H1 (cell line): ENCODE measurements at regions of chr17 and their contacts with region 1.

Region 1: GRCh38 chr17:74776044-74776977 is at the start of gene NAT9:
- DNase-seq: peak; percentile 92 to 100
- H3K4me3 ChIP-seq: peak within 1 kb of the TSS; percentile 73 to 89 (median 80)
- H3K27ac ChIP-seq: peak within 1 kb of the TSS; percentile 39; the same call in 1 of the 2 replicates
- H3K4me1 ChIP-seq: peaks cover 0 to 6% (median 3%) of the 10 kb centered on the region in 4 experiments; a peak in 3 of 7 replicates
- H3K27me3 ChIP-seq: no peaks in the 10 kb centered on the region
- CTCF ChIP-seq: no peak
- EP300 ChIP-seq: no peak
- POLR2A ChIP-seq: no peak; a peak in 1 of 3 replicates
- RAD21 ChIP-seq: no peak
- total RNA-seq, gene NAT9: 40.6 and 42.7 TPM in 2 replicates

Region 2: GRCh38 chr17:74712756-74713155 is 63.6 kb before region 1 on chr17 and contains the start of gene CD300LF:
- CTCF ChIA-PET with region 1: no interaction called
- POLR2A ChIA-PET with region 1: no interaction called
- DNase-seq: no peak
- H3K4me3 ChIP-seq: no peak within 1 kb of the TSS
- H3K27ac ChIP-seq: no peak within 1 kb of the TSS
- H3K4me1 ChIP-seq: no peaks in the 10 kb centered on the region
- H3K27me3 ChIP-seq: no peaks in the 10 kb centered on the region; a peak in 1 of 7 replicates
- CTCF ChIP-seq: no peak
- EP300 ChIP-seq: no peak
- POLR2A ChIP-seq: no peak
- RAD21 ChIP-seq: no peak
- total RNA-seq, gene CD300LF: not detected in 2 replicates

Region 3: GRCh38 chr17:74742153-74742515 is 34.2 kb before region 1 on chr17:
- CTCF ChIA-PET with region 1: interaction called, 388 read pairs
- POLR2A ChIA-PET with region 1: interaction called, 44 read pairs
- DNase-seq: no peak
- H3K4me3 ChIP-seq: no peak overlapping the region
- H3K27ac ChIP-seq: no peak overlapping the region
- H3K4me1 ChIP-seq: peaks cover 10 to 29% (median 19%) of the 10 kb centered on the region in 4 experiments
- H3K27me3 ChIP-seq: peaks cover 0 to 3% (median 0%) of the 10 kb centered on the region in 4 experiments; a peak in 2 of 7 replicates
- CTCF ChIP-seq: no peak
- EP300 ChIP-seq: no peak
- POLR2A ChIP-seq: no peak
- RAD21 ChIP-seq: no peak

Region 4: DNA sequence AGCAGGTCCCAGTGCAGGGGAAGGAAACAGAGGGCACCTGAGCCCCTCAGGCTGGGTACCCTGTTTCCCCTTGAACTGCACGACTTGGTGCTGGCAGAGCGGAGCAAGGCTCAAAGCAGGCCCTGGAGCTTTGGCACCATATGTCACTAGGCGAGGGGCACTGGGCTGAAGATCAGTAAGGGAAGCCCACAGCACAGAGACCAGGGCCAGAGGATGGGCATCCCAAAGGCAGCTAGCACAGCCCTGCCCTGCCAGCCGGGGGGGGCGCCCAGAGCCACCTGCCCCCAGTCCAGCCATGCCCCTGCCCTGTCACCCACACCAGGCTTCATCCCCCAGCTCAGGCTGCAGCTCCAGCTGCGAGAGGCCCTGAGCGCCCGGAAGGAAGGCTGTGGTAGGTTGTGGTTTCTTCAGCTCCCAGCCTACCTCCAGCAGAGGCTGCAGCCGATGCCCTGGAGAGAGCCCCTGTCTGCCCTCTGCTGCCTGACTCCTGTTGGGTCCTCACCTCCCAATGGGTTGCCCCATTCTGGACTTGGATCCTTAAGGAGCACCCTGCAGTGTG is 17.0 kb before region 1 on chr17:
- CTCF ChIA-PET with region 1: interaction called, 231 read pairs
- POLR2A ChIA-PET with region 1: interaction called, 15 read pairs
- DNase-seq: no peak
- H3K4me3 ChIP-seq: peak overlapping the region in 1 of 4 experiments; percentile 36; a peak in 2 of 8 replicates
- H3K27ac ChIP-seq: peak overlapping the region; percentile 70; the same call in 1 of the 2 replicates
- H3K4me1 ChIP-seq: peaks cover 10 to 67% (median 51%) of the 10 kb centered on the region in 4 experiments
- H3K27me3 ChIP-seq: no peaks in the 10 kb centered on the region
- CTCF ChIP-seq: no peak
- EP300 ChIP-seq: no peak
- POLR2A ChIP-seq: no peak
- RAD21 ChIP-seq: no peak

Region 5: DNA sequence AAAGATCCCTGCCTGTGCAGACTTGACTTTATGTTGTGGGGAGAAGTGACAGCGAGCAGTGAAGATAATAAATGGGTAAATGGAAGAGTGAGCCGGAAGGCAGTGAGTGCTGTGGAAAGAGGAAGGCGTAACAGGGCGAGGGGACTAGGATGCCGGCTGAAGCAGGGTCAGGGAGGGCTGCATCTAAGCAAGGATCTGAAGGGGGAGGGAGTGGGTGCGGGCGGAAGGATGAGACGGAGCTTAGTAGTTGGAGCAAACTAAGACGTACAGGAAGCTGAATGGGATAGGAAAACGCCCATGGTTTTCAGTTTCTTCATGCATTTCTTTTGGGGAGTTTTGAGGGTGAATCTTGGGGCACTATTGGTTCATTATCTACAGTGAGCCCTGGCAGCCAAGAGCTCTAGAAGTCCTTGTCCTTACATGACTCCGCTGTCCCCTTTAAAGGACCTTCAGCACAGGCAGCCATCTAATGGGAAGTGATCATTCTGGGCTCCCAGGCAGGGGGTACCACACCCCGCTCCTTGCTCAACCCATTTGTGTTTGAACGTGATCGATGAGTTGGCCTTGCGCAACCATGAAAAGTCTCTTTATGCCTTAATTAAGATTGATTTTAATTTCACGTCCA is 10.2 kb after region 1 on chr17:
- CTCF ChIA-PET with region 1: interaction called, 31 read pairs
- POLR2A ChIA-PET with region 1: interaction called, 6 read pairs
- DNase-seq: no peak
- H3K4me3 ChIP-seq: no peak overlapping the region
- H3K27ac ChIP-seq: no peak overlapping the region
- H3K4me1 ChIP-seq: peaks cover 0 to 3% (median 3%) of the 10 kb centered on the region in 4 experiments; a peak in 5 of 7 replicates
- H3K27me3 ChIP-seq: no peaks in the 10 kb centered on the region
- CTCF ChIP-seq: no peak
- EP300 ChIP-seq: no peak
- POLR2A ChIP-seq: no peak
- RAD21 ChIP-seq: no peak

Region 6: GRCh38 chr17:74873038-74873873 is 96.9 kb after region 1 on chr17:
- CTCF ChIA-PET with region 1: interaction called, 2,981 read pairs
- POLR2A ChIA-PET with region 1: interaction called, 4 read pairs
- DNase-seq: peak; percentile 98 to 99
- H3K4me3 ChIP-seq: peak overlapping the region; percentile 70 to 99 (median 84)
- H3K27ac ChIP-seq: peak overlapping the region; percentile 90
- H3K4me1 ChIP-seq: peaks cover 0 to 14% (median 6%) of the 10 kb centered on the region in 4 experiments; a peak in 6 of 7 replicates
- H3K27me3 ChIP-seq: peaks cover 0 to 3% (median 0%) of the 10 kb centered on the region in 4 experiments; a peak in 2 of 7 replicates
- CTCF ChIP-seq: no peak
- EP300 ChIP-seq: peak in 1 of 2 experiments; percentile 58; a peak in 1 of 3 replicates
- POLR2A ChIP-seq: peak in 1 of 2 experiments; percentile 98; a peak in 2 of 3 replicates
- RAD21 ChIP-seq: no peak

Region 7: GRCh38 chr17:74904687-74905409 is 128.5 kb after region 1 on chr17:
- CTCF ChIA-PET with region 1: no interaction called
- POLR2A ChIA-PET with region 1: no interaction called
- DNase-seq: no peak
- H3K4me3 ChIP-seq: no peak overlapping the region
- H3K27ac ChIP-seq: no peak overlapping the region
- H3K4me1 ChIP-seq: peaks cover 5 to 15% (median 13%) of the 10 kb centered on the region in 4 experiments
- H3K27me3 ChIP-seq: peaks cover 0 to 4% (median under 1%) of the 10 kb centered on the region in 4 experiments; a peak in 4 of 7 replicates
- CTCF ChIP-seq: no peak
- EP300 ChIP-seq: no peak
- POLR2A ChIP-seq: no peak
- RAD21 ChIP-seq: no peak